Endothelial cell of umbilical vein (primary cell): ENCODE measurements at regions of chr2 and their contacts with region 1.

Region 1: DNA sequence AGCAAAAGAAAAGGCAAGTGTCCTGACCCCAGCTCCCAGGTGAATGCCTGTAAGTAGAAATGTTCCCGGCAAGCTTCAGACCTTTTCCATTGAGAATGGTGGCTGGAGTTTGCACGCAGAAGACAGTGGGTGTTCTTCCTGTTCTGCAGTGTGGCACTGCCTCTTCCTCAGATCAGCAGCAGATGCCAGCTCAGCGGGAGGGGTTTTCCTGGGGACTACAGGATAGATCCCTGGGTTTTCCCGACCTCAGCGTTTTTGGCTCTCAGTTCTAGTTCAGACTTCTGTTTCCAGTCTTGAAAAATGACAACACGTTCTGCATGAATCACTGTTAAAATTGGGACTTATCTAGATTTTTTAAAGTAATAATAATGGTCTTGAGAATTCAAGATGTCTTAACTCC is 39.2 kb downstream of the GRHL1 start:
- DNase-seq: peak; percentile 26
- H3K4me3 ChIP-seq: no peak overlapping the region
- H3K27ac ChIP-seq: no peak overlapping the region
- H3K4me1 ChIP-seq: peaks cover 46% of the 10 kb centered on the region
- H3K27me3 ChIP-seq: no peaks in the 10 kb centered on the region
- CTCF ChIP-seq: no peak
- POLR2A ChIP-seq: no peak

Region 2: DNA sequence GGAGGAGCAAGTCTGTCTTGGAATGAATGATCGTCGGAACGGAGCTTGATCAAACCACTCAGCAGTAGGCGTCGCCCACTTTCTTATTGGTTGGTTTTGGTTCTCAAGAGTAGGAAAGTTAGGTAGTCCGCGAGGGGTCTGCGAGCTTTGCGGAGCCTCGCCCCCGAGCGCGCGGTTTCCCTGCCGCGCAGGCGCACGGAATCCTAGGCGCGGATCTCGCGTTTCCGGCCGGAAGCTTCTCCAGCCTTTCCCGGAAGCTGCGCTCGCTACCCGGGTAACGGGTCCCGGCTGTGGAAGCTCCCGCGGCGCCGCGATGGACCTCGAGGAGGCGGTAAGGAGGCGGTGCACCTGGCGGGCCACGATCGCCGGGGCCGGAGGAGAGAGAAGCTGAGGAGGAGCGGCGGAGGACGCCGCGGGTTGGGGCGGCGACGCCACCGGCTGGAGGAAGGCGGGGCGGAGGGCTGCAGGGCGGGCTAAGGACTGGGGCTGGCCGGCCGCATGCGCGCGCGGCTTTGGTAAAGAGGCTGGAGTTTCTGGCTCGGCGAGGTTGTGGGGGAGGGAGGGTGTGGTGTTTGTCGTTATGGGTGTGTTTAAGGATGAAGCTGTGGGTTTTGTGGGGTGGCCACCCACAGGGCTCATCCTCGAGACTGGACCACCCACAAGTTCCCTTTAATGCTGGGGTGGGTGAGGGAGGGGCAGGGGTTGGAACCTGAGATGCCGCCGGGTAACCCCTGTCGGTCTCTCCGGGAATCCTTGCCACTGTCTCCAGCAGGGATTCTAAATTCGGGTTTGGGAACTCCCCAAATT is 147.3 kb before region 1 on chr2 and contains the start of gene TAF1B:
- CTCF ChIA-PET with region 1: interaction called, 3 read pairs
- POLR2A ChIA-PET with region 1: no interaction called
- dilution Hi-C with region 1: no loop called
- intact Hi-C with region 1: loop called (anchors 5 kb)
- DNase-seq: peak; percentile 96
- H3K4me3 ChIP-seq: peak within 1 kb of the TSS; percentile 56 to 86 (median 84)
- H3K27ac ChIP-seq: peak within 1 kb of the TSS; percentile 78
- H3K4me1 ChIP-seq: peaks cover 28% of the 10 kb centered on the region
- H3K27me3 ChIP-seq: no peaks in the 10 kb centered on the region
- CTCF ChIP-seq: peak in 1 of 2 donors; percentile 42
- POLR2A ChIP-seq: peak; percentile 80
- total RNA-seq, gene TAF1B: 20.1 and 29.4 TPM in 2 replicates

Region 3: GRCh38 chr2:9975805-9976447 is 14.8 kb before region 1 on chr2:
- CTCF ChIA-PET with region 1: interaction called, 5 read pairs
- POLR2A ChIA-PET with region 1: no interaction called
- dilution Hi-C with region 1: no loop called
- intact Hi-C with region 1: loop called (anchors 1 kb)
- DNase-seq: peak; percentile 97
- H3K4me3 ChIP-seq: no peak overlapping the region
- H3K27ac ChIP-seq: peak overlapping the region; percentile 2
- H3K4me1 ChIP-seq: peaks cover 37% of the 10 kb centered on the region
- H3K27me3 ChIP-seq: no peaks in the 10 kb centered on the region
- CTCF ChIP-seq: no peak
- POLR2A ChIP-seq: no peak

Region 4: DNA sequence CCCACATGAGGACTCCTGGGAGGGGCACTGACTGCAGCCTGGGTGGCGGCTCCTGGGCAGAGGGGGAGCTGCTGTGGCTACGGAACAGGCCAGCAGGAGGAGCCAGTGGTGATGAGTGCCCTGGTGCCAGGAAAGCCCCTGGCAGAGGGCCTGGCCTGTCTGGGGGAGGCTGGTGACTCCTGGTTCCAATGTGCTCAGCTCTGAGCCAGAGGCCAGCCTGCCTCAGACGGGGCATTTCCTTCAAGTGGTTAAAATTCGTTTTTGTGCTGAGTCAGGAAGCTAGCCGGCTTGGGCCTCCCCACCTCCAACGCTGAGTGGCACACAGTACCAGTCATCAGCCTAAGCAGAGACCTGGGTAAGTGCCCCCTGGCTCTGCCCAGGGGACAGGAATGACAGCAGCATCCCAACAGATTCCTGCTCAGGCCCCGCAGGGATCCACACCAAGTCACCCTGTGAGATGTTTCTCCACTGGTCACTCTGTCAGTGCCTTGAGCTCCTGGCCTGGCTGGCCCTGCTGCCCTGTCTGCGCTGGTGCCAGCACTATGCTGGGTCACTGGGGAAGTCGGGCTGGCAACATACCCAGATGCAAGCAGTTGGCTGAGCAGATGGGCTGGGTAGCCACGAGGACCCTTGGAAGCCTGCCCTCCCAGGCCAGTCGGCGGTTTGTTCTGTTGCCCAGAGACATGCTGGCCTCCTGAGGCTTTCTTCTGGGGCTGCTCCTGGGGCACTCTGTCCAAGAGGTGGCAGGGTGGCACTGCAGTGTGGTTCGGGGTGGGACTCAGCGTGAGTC is 45.6 kb after region 1 on chr2:
- CTCF ChIA-PET with region 1: interaction called, 340 read pairs
- POLR2A ChIA-PET with region 1: no interaction called
- dilution Hi-C with region 1: no loop called
- intact Hi-C with region 1: loop called (anchors 2 kb)
- DNase-seq: peak; percentile 80
- H3K4me3 ChIP-seq: no peak overlapping the region
- H3K27ac ChIP-seq: peak overlapping the region; percentile 28
- H3K4me1 ChIP-seq: peaks cover 24% of the 10 kb centered on the region
- H3K27me3 ChIP-seq: no peaks in the 10 kb centered on the region
- CTCF ChIP-seq: peak; percentile 73 to 83
- POLR2A ChIP-seq: no peak

Region 5: GRCh38 chr2:10079234-10079869 is 88.6 kb after region 1 on chr2:
- CTCF ChIA-PET with region 1: no interaction called
- POLR2A ChIA-PET with region 1: no interaction called
- dilution Hi-C with region 1: no loop called
- intact Hi-C with region 1: no loop called
- DNase-seq: no peak
- H3K4me3 ChIP-seq: peak overlapping the region in 1 of 3 experiments; percentile 36
- H3K27ac ChIP-seq: no peak overlapping the region
- H3K4me1 ChIP-seq: no peaks in the 10 kb centered on the region
- H3K27me3 ChIP-seq: peaks cover 47 to 59% of the 10 kb centered on the region in 2 experiments
- CTCF ChIP-seq: no peak
- POLR2A ChIP-seq: no peak